ENCODE measurements at regions of chr1 and their contacts with region 1.

Region 1: DNA sequence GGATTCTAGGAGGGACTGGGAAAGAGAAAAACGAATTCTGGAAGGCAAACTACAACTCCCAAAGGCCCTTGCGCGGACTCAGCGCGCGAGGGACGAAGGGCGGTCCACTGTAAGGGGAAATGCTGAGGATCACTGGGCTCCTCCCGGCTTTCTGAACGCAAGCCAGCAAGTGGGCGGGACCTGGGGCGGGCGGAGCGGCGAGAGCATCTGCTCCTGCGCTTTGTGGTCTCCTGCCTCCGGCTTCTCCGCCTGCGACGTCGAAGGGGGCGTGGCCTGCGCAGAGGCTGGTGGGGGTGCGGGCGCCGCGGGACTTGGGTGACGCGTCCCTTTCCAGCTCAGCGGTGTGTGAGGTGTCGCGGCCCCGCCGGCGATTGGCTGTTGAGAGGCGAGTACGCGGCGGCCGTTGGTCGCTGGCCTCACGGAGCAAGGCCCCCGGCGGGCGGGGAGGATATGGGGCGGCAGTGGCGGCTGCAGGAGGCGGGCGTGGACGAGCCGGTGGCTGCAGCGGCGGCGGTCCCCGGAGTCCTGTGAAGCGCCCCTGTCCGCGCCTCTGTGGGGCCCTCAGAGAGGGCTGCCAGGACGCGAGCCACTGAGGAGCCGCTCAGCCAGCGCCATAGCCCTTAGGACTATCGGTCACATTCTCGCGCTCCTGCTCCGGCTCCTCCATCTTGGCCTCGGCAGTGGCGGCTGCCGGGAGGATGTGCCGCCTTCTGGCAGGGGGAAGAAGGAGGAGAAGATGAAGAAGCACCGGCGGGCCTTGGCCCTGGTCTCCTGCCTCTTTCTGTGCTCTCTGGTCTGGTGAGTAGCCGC is at the start of gene SUCO:
- DNase-seq: peak; percentile 100
- H3K4me3 ChIP-seq: peak within 1 kb of the TSS; percentile 48 to 92 (median 70)
- H3K27ac ChIP-seq: peak within 1 kb of the TSS; percentile 84
- H3K4me1 ChIP-seq: peaks cover 16% of the 10 kb centered on the region
- H3K27me3 ChIP-seq: peaks cover 7 to 15% of the 10 kb centered on the region in 2 experiments
- CTCF ChIP-seq: peak in 1 of 2 donors; percentile 22
- POLR2A ChIP-seq: peak; percentile 73
- total RNA-seq, gene SUCO: 26.6 and 27.2 TPM in 2 replicates

Region 2: DNA sequence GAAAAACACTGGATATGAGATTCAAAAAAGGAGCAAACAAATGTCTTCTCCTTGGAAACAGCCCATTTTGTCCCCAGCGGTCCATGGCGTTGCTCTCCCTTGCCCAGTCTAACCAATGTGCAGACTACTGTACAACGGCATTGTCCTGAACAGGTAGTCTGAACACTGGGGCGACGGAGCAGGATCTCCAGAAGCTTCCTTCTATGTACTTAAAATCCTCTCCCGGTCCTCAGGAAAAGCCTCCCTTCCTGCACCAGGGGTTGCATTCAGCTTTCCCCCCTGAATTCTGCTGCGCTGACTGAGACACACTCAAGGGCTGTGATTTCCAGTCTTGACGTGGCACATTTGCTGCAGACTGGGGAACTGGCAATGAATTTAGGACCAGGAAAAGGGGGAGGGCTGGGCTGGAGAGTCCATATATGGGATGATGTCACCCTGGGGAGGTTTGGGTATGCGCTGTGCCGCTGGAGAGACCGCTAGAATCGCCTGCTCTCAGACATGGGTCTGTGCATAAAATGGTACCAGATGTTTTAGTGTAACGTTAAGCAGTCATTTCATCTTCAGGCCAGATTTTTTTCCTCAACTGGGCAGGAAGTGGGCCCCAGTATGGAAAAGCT is 388.4 kb before region 1 on chr1:
- CTCF ChIA-PET with region 1: no interaction called
- POLR2A ChIA-PET with region 1: no interaction called
- dilution Hi-C with region 1: no loop called
- intact Hi-C with region 1: loop called (anchors 5 kb)
- DNase-seq: peak; percentile 76
- H3K4me3 ChIP-seq: peak overlapping the region; percentile 22 to 96 (median 38)
- H3K27ac ChIP-seq: peak overlapping the region; percentile 87
- H3K4me1 ChIP-seq: peaks cover 57% of the 10 kb centered on the region
- H3K27me3 ChIP-seq: no peaks in the 10 kb centered on the region
- CTCF ChIP-seq: no peak
- POLR2A ChIP-seq: no peak

Region 3: GRCh38 chr1:172449585-172450534 is 83.0 kb before region 1 on chr1:
- CTCF ChIA-PET with region 1: interaction called, 8 read pairs
- POLR2A ChIA-PET with region 1: no interaction called
- dilution Hi-C with region 1: no loop called
- intact Hi-C with region 1: loop called (anchors 1 kb)
- DNase-seq: peak; percentile 61
- H3K4me3 ChIP-seq: no peak overlapping the region
- H3K27ac ChIP-seq: no peak overlapping the region
- H3K4me1 ChIP-seq: peaks cover 22% of the 10 kb centered on the region
- H3K27me3 ChIP-seq: no peaks in the 10 kb centered on the region
- CTCF ChIP-seq: peak; percentile 67 to 86
- POLR2A ChIP-seq: no peak

Region 4: DNA sequence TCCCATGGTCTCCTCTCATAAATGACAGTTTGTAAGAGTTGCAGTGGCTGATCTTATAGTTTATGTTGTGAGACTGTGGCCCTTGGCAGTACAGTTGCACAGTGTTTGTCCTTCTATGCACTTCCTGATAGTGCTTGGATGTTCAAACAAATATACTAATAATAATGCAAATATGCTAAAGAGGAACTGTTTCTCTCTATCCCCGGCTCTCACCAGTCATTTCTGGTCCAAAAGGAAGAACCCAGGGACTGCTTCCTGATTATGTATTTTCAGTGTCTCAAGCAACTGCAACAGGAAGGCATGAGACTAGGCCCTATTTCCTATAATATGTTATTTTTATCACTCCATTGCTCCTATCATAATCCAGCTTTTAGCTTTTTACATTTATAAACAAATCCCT is 17.0 kb before region 1 on chr1:
- CTCF ChIA-PET with region 1: no interaction called
- POLR2A ChIA-PET with region 1: no interaction called
- dilution Hi-C with region 1: no loop called
- intact Hi-C with region 1: no loop called
- DNase-seq: peak; percentile 34
- H3K4me3 ChIP-seq: no peak overlapping the region
- H3K27ac ChIP-seq: no peak overlapping the region
- H3K4me1 ChIP-seq: no peaks in the 10 kb centered on the region
- H3K27me3 ChIP-seq: no peaks in the 10 kb centered on the region
- CTCF ChIP-seq: no peak
- POLR2A ChIP-seq: no peak

Region 5: GRCh38 chr1:172609528-172609927 is 76.6 kb after region 1 on chr1:
- CTCF ChIA-PET with region 1: no interaction called
- POLR2A ChIA-PET with region 1: no interaction called
- dilution Hi-C with region 1: no loop called
- intact Hi-C with region 1: loop called (anchors 5 kb)
- DNase-seq: no peak
- H3K4me3 ChIP-seq: no peak overlapping the region
- H3K27ac ChIP-seq: no peak overlapping the region
- H3K4me1 ChIP-seq: peaks cover 5% of the 10 kb centered on the region
- H3K27me3 ChIP-seq: no peaks in the 10 kb centered on the region
- CTCF ChIP-seq: peak in 1 of 2 donors; percentile 17
- POLR2A ChIP-seq: no peak

Region 6: DNA sequence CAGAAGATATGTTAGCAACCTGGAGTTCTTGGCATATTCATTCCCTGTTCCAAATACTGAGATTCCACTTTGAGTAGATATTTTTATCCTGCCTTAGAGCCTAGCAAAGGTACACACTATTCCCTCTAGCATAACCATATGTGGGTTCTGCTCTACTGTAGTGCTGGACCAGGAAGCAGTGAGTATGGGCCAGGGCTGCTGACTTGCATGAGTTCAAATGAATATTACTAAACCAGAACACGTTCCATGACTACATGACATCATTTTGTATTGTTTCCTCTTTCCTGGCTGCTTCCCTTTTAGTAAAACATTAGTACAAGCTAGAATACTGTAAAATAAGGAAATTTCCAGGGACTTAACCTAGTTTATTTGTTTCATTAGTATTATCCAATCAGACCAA is 476.7 kb after region 1 on chr1:
- CTCF ChIA-PET with region 1: no interaction called
- POLR2A ChIA-PET with region 1: no interaction called
- dilution Hi-C with region 1: no loop called
- intact Hi-C with region 1: loop called (anchors 5 kb)
- DNase-seq: peak; percentile 57
- H3K4me3 ChIP-seq: no peak overlapping the region
- H3K27ac ChIP-seq: no peak overlapping the region
- H3K4me1 ChIP-seq: peaks cover 6% of the 10 kb centered on the region
- H3K27me3 ChIP-seq: no peaks in the 10 kb centered on the region
- CTCF ChIP-seq: no peak
- POLR2A ChIP-seq: no peak

Measured in endothelial cell of umbilical vein (primary cell).